ENCODE measurements at regions of chr11 and their contacts with region 1.

Region 1: GRCh38 chr11:76207642-76208401 is 1.5 kb upstream of the WNT11 start:
- DNase-seq: peak; percentile 66 to 82 (median 74)
- H3K4me3 ChIP-seq: peak overlapping the region; percentile 94
- H3K4me3 Mint-ChIP-seq: peak overlapping the region; percentile 81 to 93 (median 87)
- H3K27ac ChIP-seq: no peak overlapping the region
- H3K27ac Mint-ChIP-seq: peak overlapping the region in 3 of 8 donors; percentile 13 to 78 (median 58)
- H3K4me1 ChIP-seq: peaks cover 23% of the 10 kb centered on the region
- H3K4me1 Mint-ChIP-seq: peaks cover 13 to 38% (median 18%) of the 10 kb centered on the region in 3 donors
- H3K27me3 ChIP-seq: peaks cover 44% of the 10 kb centered on the region
- H3K27me3 Mint-ChIP-seq: peaks cover 30 to 38% of the 10 kb centered on the region in 2 donors

Region 2: GRCh38 chr11:75399344-75400145 is 808.3 kb before region 1 on chr11 and contains the start of gene RPS3:
- CTCF ChIA-PET with region 1: no interaction called
- POLR2A ChIA-PET with region 1: no interaction called
- DNase-seq: peak; percentile 78 to 92 (median 85)
- H3K4me3 ChIP-seq: peak within 1 kb of the TSS; percentile 73
- H3K4me3 Mint-ChIP-seq: peak within 1 kb of the TSS; percentile 91 to 98 (median 95)
- H3K27ac ChIP-seq: peak within 1 kb of the TSS; percentile 88
- H3K27ac Mint-ChIP-seq: peak within 1 kb of the TSS; percentile 87 to 99 (median 96)
- H3K4me1 ChIP-seq: peaks cover 25% of the 10 kb centered on the region
- H3K4me1 Mint-ChIP-seq: peaks cover 48 to 53% (median 48%) of the 10 kb centered on the region in 3 donors
- H3K27me3 ChIP-seq: no peaks in the 10 kb centered on the region
- H3K27me3 Mint-ChIP-seq: no peaks in the 10 kb centered on the region
- total RNA-seq, gene RPS3: 3,916 to 3,935 TPM

Region 3: DNA sequence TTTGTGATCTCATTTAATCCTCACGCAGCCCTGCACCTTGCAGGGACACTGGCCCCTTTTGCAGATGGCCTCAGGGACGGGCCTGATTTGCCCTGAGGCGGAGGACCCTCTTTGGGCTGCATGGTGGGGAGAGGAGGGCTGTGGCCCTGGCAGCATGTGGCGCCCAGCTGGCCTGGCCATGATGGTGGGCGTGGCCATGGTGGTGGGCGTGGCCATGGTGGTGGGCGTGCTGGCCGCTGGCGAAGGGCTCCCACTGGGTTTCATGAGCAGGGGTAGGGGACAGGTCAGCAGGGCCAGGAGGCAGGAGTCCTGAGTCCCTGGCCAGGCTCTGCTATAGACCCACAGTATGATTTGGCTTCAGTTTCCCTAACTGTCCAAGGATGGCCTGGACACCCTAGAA is 14.6 kb before region 1 on chr11:
- CTCF ChIA-PET with region 1: interaction called, 23 read pairs
- POLR2A ChIA-PET with region 1: no interaction called
- DNase-seq: no peak
- H3K4me3 ChIP-seq: no peak overlapping the region
- H3K4me3 Mint-ChIP-seq: no peak overlapping the region
- H3K27ac ChIP-seq: no peak overlapping the region
- H3K27ac Mint-ChIP-seq: peak overlapping the region in 1 of 8 donors; percentile 47
- H3K4me1 ChIP-seq: no peaks in the 10 kb centered on the region
- H3K4me1 Mint-ChIP-seq: no peaks in the 10 kb centered on the region
- H3K27me3 ChIP-seq: no peaks in the 10 kb centered on the region
- H3K27me3 Mint-ChIP-seq: no peaks in the 10 kb centered on the region

Region 4: GRCh38 chr11:76235233-76236091 is 27.6 kb after region 1 on chr11:
- CTCF ChIA-PET with region 1: interaction called, 162 read pairs
- POLR2A ChIA-PET with region 1: interaction called, 39 read pairs
- DNase-seq: peak; percentile 81 to 94 (median 92)
- H3K4me3 ChIP-seq: peak overlapping the region; percentile 98
- H3K4me3 Mint-ChIP-seq: peak overlapping the region; percentile 92 to 99 (median 95)
- H3K27ac ChIP-seq: peak overlapping the region; percentile 77
- H3K27ac Mint-ChIP-seq: peak overlapping the region; percentile 92 to 100 (median 96)
- H3K4me1 ChIP-seq: peaks cover 49% of the 10 kb centered on the region
- H3K4me1 Mint-ChIP-seq: peaks cover 41 to 62% (median 52%) of the 10 kb centered on the region in 3 donors
- H3K27me3 ChIP-seq: no peaks in the 10 kb centered on the region
- H3K27me3 Mint-ChIP-seq: peaks cover 6 to 11% of the 10 kb centered on the region in 2 donors

Region 5: GRCh38 chr11:76253416-76253815 is 45.6 kb after region 1 on chr11:
- CTCF ChIA-PET with region 1: interaction called, 17 read pairs
- POLR2A ChIA-PET with region 1: interaction called, 3 read pairs
- DNase-seq: no peak
- H3K4me3 ChIP-seq: no peak overlapping the region
- H3K4me3 Mint-ChIP-seq: no peak overlapping the region
- H3K27ac ChIP-seq: no peak overlapping the region
- H3K27ac Mint-ChIP-seq: no peak overlapping the region
- H3K4me1 ChIP-seq: no peaks in the 10 kb centered on the region
- H3K4me1 Mint-ChIP-seq: no peaks in the 10 kb centered on the region
- H3K27me3 ChIP-seq: no peaks in the 10 kb centered on the region
- H3K27me3 Mint-ChIP-seq: peaks cover 4 to 20% of the 10 kb centered on the region in 2 donors

Region 6: GRCh38 chr11:76307396-76307795 is 99.6 kb after region 1 on chr11:
- CTCF ChIA-PET with region 1: interaction called, 303 read pairs
- POLR2A ChIA-PET with region 1: no interaction called
- DNase-seq: no peak
- H3K4me3 ChIP-seq: no peak overlapping the region
- H3K4me3 Mint-ChIP-seq: no peak overlapping the region
- H3K27ac ChIP-seq: no peak overlapping the region
- H3K27ac Mint-ChIP-seq: no peak overlapping the region
- H3K4me1 ChIP-seq: no peaks in the 10 kb centered on the region
- H3K4me1 Mint-ChIP-seq: no peaks in the 10 kb centered on the region
- H3K27me3 ChIP-seq: no peaks in the 10 kb centered on the region
- H3K27me3 Mint-ChIP-seq: peaks cover 4% of the 10 kb centered on the region in 2 donors

Region 7: DNA sequence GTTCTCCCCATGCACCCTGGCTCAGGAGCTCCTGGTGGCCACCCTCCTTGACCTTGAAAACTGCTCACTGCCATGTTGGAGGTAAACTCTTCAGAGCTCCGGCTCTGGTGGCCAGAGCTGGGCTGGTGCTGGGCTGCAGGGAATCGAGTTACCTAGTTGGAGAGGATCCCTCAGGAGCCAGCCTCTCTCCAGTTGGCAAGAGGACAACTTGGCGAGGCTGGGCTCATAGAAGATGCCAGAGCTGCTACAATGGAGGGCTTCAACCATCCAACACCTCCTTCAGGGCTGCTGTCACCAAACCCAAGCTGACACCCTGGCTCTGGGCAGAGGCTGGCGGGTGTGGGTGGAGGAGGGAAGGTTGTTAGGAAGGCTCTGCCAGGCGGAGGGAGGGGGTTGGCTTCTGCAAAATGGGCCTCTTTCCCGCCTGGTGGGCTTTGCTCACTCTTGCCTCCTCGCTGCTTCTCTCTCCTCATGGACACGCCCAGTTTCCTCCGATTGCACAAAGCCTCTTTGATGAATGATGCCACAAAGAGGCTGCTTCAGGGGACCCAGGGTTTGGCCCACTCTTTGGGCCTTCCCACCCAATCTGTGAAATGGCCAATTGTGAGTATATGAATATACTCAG is 120.0 kb after region 1 on chr11:
- CTCF ChIA-PET with region 1: interaction called, 303 read pairs
- POLR2A ChIA-PET with region 1: no interaction called
- DNase-seq: no peak
- H3K4me3 ChIP-seq: no peak overlapping the region
- H3K4me3 Mint-ChIP-seq: no peak overlapping the region
- H3K27ac ChIP-seq: no peak overlapping the region
- H3K27ac Mint-ChIP-seq: peak overlapping the region in 1 of 8 donors; percentile 89
- H3K4me1 ChIP-seq: no peaks in the 10 kb centered on the region
- H3K4me1 Mint-ChIP-seq: no peaks in the 10 kb centered on the region
- H3K27me3 ChIP-seq: no peaks in the 10 kb centered on the region
- H3K27me3 Mint-ChIP-seq: peaks cover 3 to 19% of the 10 kb centered on the region in 2 donors

Region 8: GRCh38 chr11:76672431-76673175 is 464.8 kb after region 1 on chr11:
- CTCF ChIA-PET with region 1: interaction called, 10 read pairs
- POLR2A ChIA-PET with region 1: interaction called, 3 read pairs
- DNase-seq: peak; percentile 7 to 76 (median 24)
- H3K4me3 ChIP-seq: peak overlapping the region; percentile 23
- H3K4me3 Mint-ChIP-seq: peak overlapping the region; percentile 73 to 86 (median 80)
- H3K27ac ChIP-seq: peak overlapping the region; percentile 21
- H3K27ac Mint-ChIP-seq: peak overlapping the region; percentile 6 to 99 (median 90)
- H3K4me1 ChIP-seq: peaks cover 28% of the 10 kb centered on the region
- H3K4me1 Mint-ChIP-seq: peaks cover 28 to 36% (median 30%) of the 10 kb centered on the region in 3 donors
- H3K27me3 ChIP-seq: peaks cover 7% of the 10 kb centered on the region
- H3K27me3 Mint-ChIP-seq: peaks cover 5 to 8% of the 10 kb centered on the region in 2 donors